Spleen (tissue), 13 donors: ENCODE measurements at regions of chr4 and their contacts with region 1.

Region 1: GRCh38 chr4:13484122-13484748 is at the start of gene RAB28:
- DNase-seq: peak; percentile 99
- H3K4me3 ChIP-seq: peak within 1 kb of the TSS; percentile 37 to 97 (median 87)
- H3K27ac ChIP-seq: peak within 1 kb of the TSS; percentile 89 to 97 (median 92)
- H3K4me1 ChIP-seq: peaks cover 11 to 54% (median 27%) of the 10 kb centered on the region in 6 donors
- H3K27me3 ChIP-seq: peaks cover 0 to 16% (median 7%) of the 10 kb centered on the region in 7 donors
- CTCF ChIP-seq: peak in 3 of 11 experiments; percentile 4 to 17 (median 15)
- POLR2A ChIP-seq: peak in 2 of 3 donors; percentile 11 to 27
- total RNA-seq, gene RAB28: 15.0 to 23.4 (median 19.9) TPM

Region 2: GRCh38 chr4:13240066-13240465 is 244.2 kb before region 1 on chr4:
- intact Hi-C with region 1: no loop called
- DNase-seq: no peak
- H3K4me3 ChIP-seq: no peak overlapping the region
- H3K27ac ChIP-seq: no peak overlapping the region
- H3K4me1 ChIP-seq: no peaks in the 10 kb centered on the region
- H3K27me3 ChIP-seq: no peaks in the 10 kb centered on the region
- CTCF ChIP-seq: no peak
- POLR2A ChIP-seq: no peak

Region 3: DNA sequence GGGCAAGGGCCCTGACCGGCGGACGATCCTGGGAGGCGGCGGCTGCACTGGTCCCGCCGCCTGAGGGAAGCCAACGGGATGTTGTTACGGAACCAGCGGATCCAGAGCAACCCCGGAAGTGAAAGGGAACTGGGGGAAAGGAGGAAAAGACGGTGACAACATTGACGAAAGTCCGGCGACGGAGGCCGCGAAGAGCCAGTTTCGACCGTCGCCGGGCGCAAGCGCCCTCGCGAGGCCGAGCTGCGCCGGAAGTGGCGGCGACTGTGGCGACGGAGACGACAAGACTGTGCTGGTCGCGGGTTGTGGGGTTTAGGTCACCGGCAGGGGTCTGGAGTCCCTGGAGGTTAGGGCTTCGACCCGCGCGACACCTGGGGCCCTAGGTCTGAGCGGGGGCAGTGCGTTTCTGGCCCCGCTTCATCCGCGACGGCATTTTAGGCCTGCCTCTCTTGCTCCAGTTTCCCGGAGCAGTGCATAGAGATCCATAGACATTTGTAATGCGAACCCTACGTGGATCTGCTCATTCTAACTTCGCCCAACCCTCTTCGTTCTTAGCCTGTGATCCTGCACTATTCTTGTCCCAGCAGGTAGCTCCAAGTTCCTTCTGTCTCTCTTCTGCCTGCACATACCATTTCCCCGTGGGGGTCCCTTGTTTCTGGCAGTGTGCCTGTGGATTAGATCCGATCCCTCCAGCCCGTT is 143.5 kb after region 1 on chr4 and contains the start of gene BOD1L1:
- intact Hi-C with region 1: loop called (anchors 5 kb)
- DNase-seq: peak; percentile 97
- H3K4me3 ChIP-seq: peak within 1 kb of the TSS; percentile 77 to 95 (median 81)
- H3K27ac ChIP-seq: peak within 1 kb of the TSS; percentile 90 to 98 (median 94)
- H3K4me1 ChIP-seq: peaks cover 19 to 54% (median 46%) of the 10 kb centered on the region in 6 donors
- H3K27me3 ChIP-seq: no peaks in the 10 kb centered on the region
- CTCF ChIP-seq: peak in 8 of 11 experiments; percentile 45 to 73 (median 62)
- POLR2A ChIP-seq: peak in 2 of 3 donors; percentile 32 to 90
- total RNA-seq, gene BOD1L1: 64.5 to 83.3 (median 74.3) TPM